Left cardiac atrium (tissue), 4 donors: ENCODE measurements at regions of chr21 and their contacts with region 1.

Region 1: GRCh38 chr21:34202553-34203372 is 129.4 kb downstream of the MRPS6 start:
- DNase-seq: peak; percentile 60
- ATAC-seq: peak; percentile 13 to 43

Region 2: GRCh38 chr21:33936301-33937038 is 266.3 kb before region 1 on chr21:
- intact Hi-C with region 1: loop called in 1 of 2 experiments (anchors 5 kb)
- DNase-seq: no peak
- ATAC-seq: peak in 1 of 2 donors; percentile 36

Region 3: DNA sequence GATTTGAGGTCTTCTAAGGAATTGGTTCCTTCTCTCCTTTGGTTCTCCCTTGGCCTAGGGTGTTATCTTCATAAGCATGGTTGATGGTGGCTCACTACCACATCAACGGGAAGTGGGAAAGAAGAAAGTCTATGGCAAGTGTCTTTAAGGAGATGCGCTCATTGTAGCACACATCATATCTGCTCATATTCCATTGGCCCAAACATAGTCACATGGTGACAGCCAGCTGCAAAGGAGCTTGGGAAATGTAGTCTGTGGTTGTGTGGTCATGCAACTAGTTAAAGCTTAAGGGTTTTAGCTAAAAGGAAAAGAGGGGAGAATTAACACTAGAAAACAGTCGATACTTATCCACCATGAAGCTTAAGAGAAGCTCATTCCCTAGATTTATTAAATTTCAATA is 140.8 kb before region 1 on chr21:
- intact Hi-C with region 1: loop called in 1 of 2 experiments (anchors 10 kb)
- DNase-seq: no peak
- ATAC-seq: no peak

Region 4: DNA sequence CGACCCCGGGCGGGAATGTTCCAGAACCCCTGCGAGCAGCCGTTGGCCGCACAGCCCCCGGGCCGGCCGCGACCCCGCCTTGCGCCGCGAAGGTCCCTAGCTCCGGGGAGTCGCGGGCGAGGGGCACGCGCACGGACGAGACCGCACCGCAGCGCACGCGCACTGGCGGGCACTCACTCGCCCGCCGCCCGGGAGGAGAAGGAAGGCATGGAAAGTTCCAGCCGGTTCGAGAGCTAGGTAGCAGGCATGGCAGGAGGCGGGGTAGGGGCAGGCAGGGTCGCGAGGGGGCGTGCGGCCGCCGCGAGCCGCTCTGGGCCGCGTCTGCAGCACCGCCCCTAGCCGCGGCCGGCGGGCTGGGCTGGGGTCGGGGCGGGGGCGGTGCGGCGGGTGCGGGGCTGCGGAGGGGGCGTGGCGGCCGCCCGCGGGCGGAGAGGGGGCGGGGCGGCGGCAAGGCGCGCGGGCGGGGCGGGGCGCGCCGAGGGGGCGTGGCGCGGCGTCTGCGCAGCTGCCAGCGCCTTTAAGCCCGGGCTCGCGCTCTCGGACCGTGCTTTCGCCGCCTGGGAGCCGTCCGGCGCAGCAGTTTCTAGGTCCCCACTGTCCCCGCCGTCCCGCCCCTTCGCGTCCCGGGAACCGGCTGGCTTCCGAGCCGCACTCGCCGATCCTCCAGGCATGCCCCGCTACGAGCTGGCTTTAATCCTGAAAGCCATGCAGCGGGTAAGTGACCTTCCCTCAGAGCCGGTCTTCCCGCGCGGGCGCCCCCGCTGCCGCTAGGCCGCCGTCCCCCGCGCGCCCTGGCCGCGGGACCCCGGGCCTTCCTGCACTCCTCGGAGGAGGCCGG is 129.5 kb before region 1 on chr21 and contains the starts of genes MRPS6 and SLC5A3:
- intact Hi-C with region 1: loop called (anchors 10 kb)
- DNase-seq: peak; percentile 89
- ATAC-seq: peak; percentile 85 to 88
- total RNA-seq, gene MRPS6: 54.8 to 67.2 TPM
- total RNA-seq, gene SLC5A3: 6.6 to 13.4 TPM

Region 5: DNA sequence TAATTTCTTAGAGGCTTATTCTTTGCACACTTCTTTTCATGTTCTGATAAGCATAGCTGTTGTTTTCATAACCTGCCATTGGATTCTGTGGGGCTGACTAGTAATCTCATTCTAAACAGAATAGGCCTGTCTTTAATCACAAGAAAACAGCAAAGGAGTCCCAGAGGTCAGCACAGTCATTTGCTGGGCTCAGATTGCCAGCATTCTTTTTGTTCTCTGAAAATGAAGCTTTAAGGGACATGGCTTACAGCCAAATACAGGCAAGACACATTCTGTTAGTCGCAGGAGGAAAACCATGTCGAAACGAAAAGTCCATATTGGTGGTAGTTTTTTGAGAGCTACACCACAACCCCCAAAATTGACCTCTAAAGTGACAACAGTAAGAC is 54.4 kb before region 1 on chr21:
- intact Hi-C with region 1: loop called in 1 of 2 experiments (anchors 10 kb)
- DNase-seq: no peak
- ATAC-seq: no peak

Region 6: DNA sequence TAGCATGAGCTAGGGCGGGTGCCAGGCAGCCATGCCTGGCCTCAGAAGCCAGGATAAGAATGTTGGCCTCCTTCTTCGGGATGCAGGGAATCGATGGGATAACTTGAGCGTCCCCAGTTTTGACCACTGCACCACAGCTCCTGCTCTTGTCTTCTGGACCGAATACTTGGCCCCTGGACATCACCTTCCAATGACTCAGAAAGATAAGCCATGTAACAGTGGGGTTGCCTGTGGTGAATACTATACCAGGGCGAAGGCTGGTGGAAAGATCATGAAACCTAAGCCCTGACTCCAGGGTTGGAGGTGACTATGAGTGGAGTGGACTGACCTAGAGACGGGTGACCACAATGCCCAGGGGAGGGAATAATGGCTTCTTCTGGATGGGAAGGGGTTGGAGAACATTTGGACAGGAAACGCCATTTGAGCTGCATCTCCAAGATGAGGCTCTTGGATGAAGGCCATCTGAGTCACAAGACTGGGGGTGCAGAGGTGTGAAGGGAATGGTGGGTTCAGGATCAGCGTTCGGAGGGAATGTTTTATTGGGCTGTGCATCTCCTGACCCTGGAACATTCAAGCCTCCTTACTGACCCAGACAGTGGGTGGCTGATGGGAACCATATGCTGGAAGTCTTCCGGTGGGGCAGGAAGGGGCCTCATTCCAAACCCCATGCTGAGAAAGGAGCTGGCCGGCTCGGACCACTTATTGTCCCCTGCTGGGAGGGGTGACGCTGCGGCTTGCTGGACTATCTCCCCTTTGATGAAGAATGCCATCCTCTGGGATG is 142.5 kb after region 1 on chr21:
- intact Hi-C with region 1: loop called in 1 of 2 experiments (anchors 5 kb)
- DNase-seq: no peak
- ATAC-seq: peak; percentile 35 to 58